ENCODE measurements at regions of chr1 and their contacts with region 1.

Region 1: GRCh38 chr1:18100491-18101063 is 7.0 kb upstream of the IGSF21 start:
- DNase-seq: peak; percentile 82
- H3K4me3 Mint-ChIP-seq: no peak overlapping the region
- H3K27ac Mint-ChIP-seq: no peak overlapping the region
- H3K4me1 Mint-ChIP-seq: peaks cover 3% of the 10 kb centered on the region
- H3K27me3 Mint-ChIP-seq: peaks cover 2% of the 10 kb centered on the region

Region 2: GRCh38 chr1:17661546-17662157 is 438.9 kb before region 1 on chr1:
- intact Hi-C with region 1: loop called (anchors 2 kb)
- DNase-seq: peak; percentile 86
- H3K4me3 Mint-ChIP-seq: no peak overlapping the region
- H3K27ac Mint-ChIP-seq: no peak overlapping the region
- H3K4me1 Mint-ChIP-seq: no peaks in the 10 kb centered on the region
- H3K27me3 Mint-ChIP-seq: no peaks in the 10 kb centered on the region

Region 3: DNA sequence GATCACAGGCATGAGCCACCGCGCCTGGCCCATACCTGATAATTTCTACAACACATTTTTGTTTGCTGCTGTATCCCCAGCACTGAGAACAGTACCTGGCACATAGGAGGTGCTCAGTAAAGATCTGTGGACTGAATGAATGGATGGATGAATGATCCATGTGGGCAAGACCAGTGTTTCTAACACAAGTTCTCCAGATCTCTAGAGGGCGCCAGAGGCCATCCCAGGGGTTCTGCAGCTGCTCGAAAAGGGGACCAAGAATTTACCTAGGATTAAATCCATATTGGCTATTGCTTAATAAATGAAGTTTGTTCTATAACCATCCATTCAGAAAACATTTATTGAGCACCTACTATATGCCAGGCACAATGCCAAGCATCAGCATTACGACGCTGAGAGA is 177.7 kb before region 1 on chr1:
- intact Hi-C with region 1: loop called (anchors 10 kb)
- DNase-seq: peak; percentile 57
- H3K4me3 Mint-ChIP-seq: no peak overlapping the region
- H3K27ac Mint-ChIP-seq: no peak overlapping the region
- H3K4me1 Mint-ChIP-seq: no peaks in the 10 kb centered on the region
- H3K27me3 Mint-ChIP-seq: no peaks in the 10 kb centered on the region

Region 4: GRCh38 chr1:18643154-18644012 is 542.8 kb after region 1 on chr1:
- intact Hi-C with region 1: loop called (anchors 10 kb)
- DNase-seq: peak; percentile 61
- H3K4me3 Mint-ChIP-seq: peak overlapping the region; percentile 21
- H3K27ac Mint-ChIP-seq: peak overlapping the region; percentile 20
- H3K4me1 Mint-ChIP-seq: peaks cover 14% of the 10 kb centered on the region
- H3K27me3 Mint-ChIP-seq: peaks cover 84% of the 10 kb centered on the region

Region 5: DNA sequence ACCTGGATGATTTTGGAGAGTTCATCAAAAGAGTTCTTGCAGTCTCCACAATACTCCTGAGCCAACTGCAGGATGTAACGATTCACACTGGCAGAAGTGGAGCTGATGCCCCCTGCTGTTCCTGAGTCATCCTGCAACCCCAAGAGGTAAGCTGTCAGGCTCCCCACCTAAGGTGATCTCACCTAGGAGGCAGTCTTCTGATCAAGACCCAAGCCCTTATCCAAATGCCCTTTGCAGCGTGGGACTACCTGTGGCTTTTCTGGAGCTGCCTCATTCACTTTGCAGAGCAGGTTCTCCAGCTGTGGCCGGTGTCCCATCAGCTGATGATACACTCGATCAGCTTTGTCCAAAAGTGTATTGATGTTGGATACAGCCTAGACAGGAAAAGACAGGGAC is 1013.1 kb after region 1 on chr1:
- intact Hi-C with region 1: no loop called
- DNase-seq: peak; percentile 84
- H3K4me3 Mint-ChIP-seq: no peak overlapping the region
- H3K27ac Mint-ChIP-seq: no peak overlapping the region
- H3K4me1 Mint-ChIP-seq: no peaks in the 10 kb centered on the region
- H3K27me3 Mint-ChIP-seq: no peaks in the 10 kb centered on the region